Ovary (tissue), 10 donors: ENCODE measurements at regions of chr13 and their contacts with region 1.

Region 1: DNA sequence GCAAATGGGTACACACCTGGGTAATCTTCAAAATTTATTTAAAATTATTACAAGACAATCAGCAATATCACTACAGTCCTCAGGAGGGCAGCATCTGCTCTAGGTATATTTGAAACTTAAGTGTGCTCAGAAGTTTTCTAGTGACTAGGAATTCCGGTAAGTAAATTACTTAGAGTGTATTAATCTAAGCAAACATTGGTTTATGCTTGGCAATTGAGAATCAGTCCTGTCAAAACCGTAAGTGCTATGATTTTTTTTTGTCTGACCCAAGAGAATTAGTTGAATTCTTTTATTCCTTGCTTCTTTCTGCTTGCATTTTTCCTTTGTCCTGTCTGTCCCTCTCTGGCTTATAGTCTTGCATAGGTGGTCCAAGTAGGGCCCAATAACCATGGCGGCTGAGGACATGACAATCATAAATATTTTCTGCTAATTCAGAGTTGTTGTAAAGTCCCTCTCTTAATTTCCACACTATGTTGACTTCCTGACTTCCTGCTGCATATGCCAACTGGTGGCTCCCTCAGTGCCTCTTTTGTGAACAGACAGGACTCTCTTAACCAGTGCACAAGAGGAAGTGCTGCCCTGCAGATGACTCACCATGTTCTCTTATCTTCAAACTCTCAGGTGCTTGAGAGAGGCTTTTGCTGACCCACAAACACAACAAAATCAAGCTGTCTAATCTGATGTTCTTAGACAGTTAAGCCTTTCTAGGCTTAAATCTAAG is 82.2 kb downstream of the SLAIN1 start:
- DNase-seq: peak in 1 of 5 donors; percentile 37
- H3K4me3 ChIP-seq: no peak overlapping the region
- H3K27ac ChIP-seq: no peak overlapping the region
- H3K4me1 ChIP-seq: no peaks in the 10 kb centered on the region
- H3K27me3 ChIP-seq: no peaks in the 10 kb centered on the region
- CTCF ChIP-seq: peak in 2 of 3 donors; percentile 41 to 65
- EP300 ChIP-seq: no peak
- POLR2A ChIP-seq: no peak

Region 2: GRCh38 chr13:78121459-78122348 is 342.0 kb after region 1 on chr13:
- intact Hi-C with region 1: loop called in 1 of 4 experiments (anchors 5 kb)
- DNase-seq: peak in 2 of 5 donors; percentile 15 to 46
- H3K4me3 ChIP-seq: peak overlapping the region; percentile 3
- H3K27ac ChIP-seq: no peak overlapping the region
- H3K4me1 ChIP-seq: no peaks in the 10 kb centered on the region
- H3K27me3 ChIP-seq: no peaks in the 10 kb centered on the region
- CTCF ChIP-seq: peak in 2 of 3 donors; percentile 57 to 74
- EP300 ChIP-seq: no peak
- POLR2A ChIP-seq: no peak